Caki2 (cell line): ENCODE measurements at regions of chr3 and their contacts with region 1.

Region 1: GRCh38 chr3:195259475-195260279 is 11.3 kb downstream of the XXYLT1 start:
- DNase-seq: peak; percentile 89

Region 2: GRCh38 chr3:194682694-194683310 is 576.9 kb before region 1 on chr3:
- in situ Hi-C with region 1: loop called (anchors 10 kb)
- DNase-seq: peak; percentile 84